ENCODE measurements at regions of chr20 and their contacts with region 1.

Region 1: GRCh38 chr20:32819992-32820710 is 397 bp downstream of the MAPRE1 start:
- DNase-seq: peak; percentile 85 to 93 (median 91)
- H3K4me3 ChIP-seq: peak overlapping the region; percentile 83 to 94
- H3K4me3 Mint-ChIP-seq: peak overlapping the region; percentile 96 to 99 (median 98)
- H3K27ac ChIP-seq: peak overlapping the region; percentile 90
- H3K27ac Mint-ChIP-seq: peak overlapping the region; percentile 98 to 100 (median 99)
- H3K4me1 ChIP-seq: peaks cover 49% of the 10 kb centered on the region
- H3K4me1 Mint-ChIP-seq: peaks cover 34 to 48% (median 40%) of the 10 kb centered on the region in 4 donors
- H3K27me3 ChIP-seq: no peaks in the 10 kb centered on the region
- H3K27me3 Mint-ChIP-seq: no peaks in the 10 kb centered on the region

Region 2: GRCh38 chr20:32796981-32797451 is 23.1 kb before region 1 on chr20:
- CTCF ChIA-PET with region 1: interaction called, 8 read pairs
- POLR2A ChIA-PET with region 1: interaction called, 16 read pairs
- intact Hi-C with region 1: no loop called
- DNase-seq: no peak
- H3K4me3 ChIP-seq: no peak overlapping the region
- H3K4me3 Mint-ChIP-seq: peak overlapping the region in 5 of 8 donors; percentile 25 to 57 (median 45)
- H3K27ac ChIP-seq: no peak overlapping the region
- H3K27ac Mint-ChIP-seq: peak overlapping the region; percentile 37 to 90 (median 60)
- H3K4me1 ChIP-seq: peaks cover 52% of the 10 kb centered on the region
- H3K4me1 Mint-ChIP-seq: peaks cover 27 to 53% (median 38%) of the 10 kb centered on the region in 4 donors
- H3K27me3 ChIP-seq: no peaks in the 10 kb centered on the region
- H3K27me3 Mint-ChIP-seq: no peaks in the 10 kb centered on the region

Region 3: GRCh38 chr20:32830437-32830836 is 10.3 kb after region 1 on chr20:
- CTCF ChIA-PET with region 1: interaction called, 6 read pairs
- POLR2A ChIA-PET with region 1: interaction called, 38 read pairs
- intact Hi-C with region 1: loop called (anchors 1 kb)
- DNase-seq: no peak
- H3K4me3 ChIP-seq: no peak overlapping the region
- H3K4me3 Mint-ChIP-seq: peak overlapping the region in 1 of 8 donors; percentile 59
- H3K27ac ChIP-seq: no peak overlapping the region
- H3K27ac Mint-ChIP-seq: peak overlapping the region in 3 of 7 donors; percentile 2 to 82 (median 57)
- H3K4me1 ChIP-seq: peaks cover 53% of the 10 kb centered on the region
- H3K4me1 Mint-ChIP-seq: peaks cover 36 to 70% (median 53%) of the 10 kb centered on the region in 4 donors
- H3K27me3 ChIP-seq: no peaks in the 10 kb centered on the region
- H3K27me3 Mint-ChIP-seq: no peaks in the 10 kb centered on the region

Measured in CD4-positive, alpha-beta memory T cell (primary cell).